Ascending aorta (tissue), 2 donors: ENCODE measurements at regions of chr19 and their contacts with region 1.

Region 1: GRCh38 chr19:1905071-1905862 is at the starts of genes ADAT3 and SCAMP4:
- DNase-seq: peak; percentile 94 to 99
- H3K4me3 ChIP-seq: peak within 1 kb of the TSS; percentile 73 to 82
- H3K27ac ChIP-seq: peak within 1 kb of the TSS; percentile 74 to 81
- H3K4me1 ChIP-seq: peaks cover 8 to 13% of the 10 kb centered on the region in 2 donors
- H3K27me3 ChIP-seq: no peaks in the 10 kb centered on the region
- CTCF ChIP-seq: no peak
- total RNA-seq, gene ADAT3: 18.4 TPM
- total RNA-seq, gene SCAMP4: 322 TPM

Region 2: GRCh38 chr19:1754616-1755466 is 150.4 kb before region 1 on chr19:
- intact Hi-C with region 1: no loop called
- DNase-seq: no peak
- H3K4me3 ChIP-seq: no peak overlapping the region
- H3K27ac ChIP-seq: no peak overlapping the region
- H3K4me1 ChIP-seq: peaks cover 3 to 5% of the 10 kb centered on the region in 2 donors
- H3K27me3 ChIP-seq: peaks cover 46% of the 10 kb centered on the region
- CTCF ChIP-seq: no peak

Region 3: DNA sequence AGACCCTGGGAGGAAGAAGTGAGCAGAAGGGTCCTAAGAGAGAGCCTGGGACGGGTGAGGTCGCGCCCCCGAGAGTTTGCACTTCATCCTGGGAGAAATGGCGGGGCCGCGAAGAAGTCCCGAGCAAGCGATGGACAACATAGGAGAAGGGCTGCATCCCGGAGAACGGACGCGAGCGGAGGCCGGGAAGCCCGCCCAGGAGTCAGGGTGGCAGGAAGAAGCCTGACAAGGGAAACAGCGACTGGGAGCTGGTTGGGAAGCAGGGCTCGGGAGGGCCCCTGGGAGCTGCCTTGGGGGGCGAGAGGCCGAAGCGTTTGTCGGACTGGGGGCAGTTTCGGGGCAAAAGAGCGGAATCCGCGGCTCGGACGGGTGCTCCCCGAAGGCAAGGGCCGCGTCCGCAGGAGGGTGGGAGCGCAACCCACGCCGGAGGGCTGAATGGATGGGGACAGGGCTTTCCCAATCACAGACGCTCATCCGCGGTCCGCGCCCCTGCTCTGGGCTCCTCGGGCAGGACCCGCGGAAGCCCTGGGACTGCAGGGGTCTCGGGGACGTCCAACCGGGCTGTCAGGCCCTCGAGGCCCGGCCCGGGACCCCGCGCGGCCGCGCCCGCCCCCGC is 20.4 kb before region 1 on chr19:
- intact Hi-C with region 1: loop called (anchors 2 kb)
- DNase-seq: no peak
- H3K4me3 ChIP-seq: peak overlapping the region; percentile 93 to 100
- H3K27ac ChIP-seq: peak overlapping the region; percentile 84 to 88
- H3K4me1 ChIP-seq: peaks cover 15 to 26% of the 10 kb centered on the region in 2 donors
- H3K27me3 ChIP-seq: no peaks in the 10 kb centered on the region
- CTCF ChIP-seq: peak in 1 of 3 experiments; percentile 1

Region 4: GRCh38 chr19:1992759-1993260 is 87.5 kb after region 1 on chr19:
- intact Hi-C with region 1: no loop called
- DNase-seq: no peak
- H3K4me3 ChIP-seq: no peak overlapping the region
- H3K27ac ChIP-seq: no peak overlapping the region
- H3K4me1 ChIP-seq: no peaks in the 10 kb centered on the region
- H3K27me3 ChIP-seq: no peaks in the 10 kb centered on the region
- CTCF ChIP-seq: no peak

Region 5: GRCh38 chr19:2113439-2114211 is 208.4 kb after region 1 on chr19:
- intact Hi-C with region 1: no loop called
- DNase-seq: no peak
- H3K4me3 ChIP-seq: no peak overlapping the region
- H3K27ac ChIP-seq: peak overlapping the region; percentile 34 to 62
- H3K4me1 ChIP-seq: no peaks in the 10 kb centered on the region
- H3K27me3 ChIP-seq: no peaks in the 10 kb centered on the region
- CTCF ChIP-seq: no peak